CD8-positive, alpha-beta memory T cell (primary cell): ENCODE measurements at regions of chr16 and their contacts with region 1.

Region 1: GRCh38 chr16:87778830-87779579 is 13.2 kb upstream of the KLHDC4 start:
- DNase-seq: peak; percentile 84 to 92 (median 87)
- H3K4me3 ChIP-seq: no peak overlapping the region
- H3K4me3 Mint-ChIP-seq: peak overlapping the region; percentile 37 to 77 (median 68)
- H3K27ac ChIP-seq: peak overlapping the region; percentile 69
- H3K27ac Mint-ChIP-seq: peak overlapping the region; percentile 34 to 99 (median 96)
- H3K4me1 ChIP-seq: peaks cover 42% of the 10 kb centered on the region
- H3K4me1 Mint-ChIP-seq: peaks cover 30 to 39% (median 36%) of the 10 kb centered on the region in 3 donors
- H3K27me3 ChIP-seq: no peaks in the 10 kb centered on the region
- H3K27me3 Mint-ChIP-seq: peaks cover 0 to 3% of the 10 kb centered on the region in 2 donors

Region 2: DNA sequence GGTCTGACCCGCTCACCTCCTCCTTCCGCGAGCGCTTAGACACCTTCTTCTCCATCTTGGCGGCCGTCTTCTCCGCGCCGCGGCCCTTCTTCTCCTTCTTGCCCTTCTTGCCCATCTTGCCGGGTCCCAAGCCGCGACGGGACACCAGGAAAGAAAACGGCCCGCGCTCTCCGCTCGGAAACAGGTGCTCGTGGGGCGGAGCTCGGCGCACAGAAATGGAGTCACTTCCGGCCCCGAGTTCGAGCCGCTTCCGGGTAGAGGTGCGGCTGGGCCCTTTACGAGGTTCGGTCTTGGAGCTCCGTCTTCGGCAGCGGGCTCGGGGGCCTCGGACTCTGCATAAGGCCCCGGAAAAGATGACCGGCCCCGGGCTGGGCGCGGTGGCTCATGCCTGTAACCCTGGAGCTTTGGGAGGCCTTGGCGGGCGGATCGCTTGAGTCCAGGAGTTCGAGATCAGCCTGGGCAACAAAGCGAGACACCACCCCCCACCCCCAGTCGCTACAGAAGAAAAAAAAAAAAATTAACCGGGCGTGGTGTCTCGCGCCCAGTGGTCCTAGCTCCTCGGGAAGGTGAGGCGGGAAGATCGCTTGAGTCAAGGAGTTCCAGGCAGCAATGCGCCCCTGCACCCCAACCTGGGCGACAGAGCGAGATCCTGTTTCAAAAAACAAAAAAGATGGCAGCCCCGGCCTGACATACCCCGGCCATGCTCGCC is 13.1 kb before region 1 on chr16 and contains the start of gene KLHDC4:
- CTCF ChIA-PET with region 1: interaction called, 77 read pairs
- POLR2A ChIA-PET with region 1: interaction called, 15 read pairs
- DNase-seq: peak; percentile 84 to 92 (median 86)
- H3K4me3 ChIP-seq: peak within 1 kb of the TSS; percentile 89
- H3K4me3 Mint-ChIP-seq: peak within 1 kb of the TSS; percentile 95 to 100 (median 96)
- H3K27ac ChIP-seq: peak within 1 kb of the TSS; percentile 93
- H3K27ac Mint-ChIP-seq: peak within 1 kb of the TSS; percentile 95 to 100 (median 99)
- H3K4me1 ChIP-seq: peaks cover 43% of the 10 kb centered on the region
- H3K4me1 Mint-ChIP-seq: peaks cover 46 to 51% (median 51%) of the 10 kb centered on the region in 3 donors
- H3K27me3 ChIP-seq: no peaks in the 10 kb centered on the region
- H3K27me3 Mint-ChIP-seq: peaks cover 0 to 2% of the 10 kb centered on the region in 2 donors
- total RNA-seq, gene KLHDC4: 71.5 to 77.3 TPM

Region 3: DNA sequence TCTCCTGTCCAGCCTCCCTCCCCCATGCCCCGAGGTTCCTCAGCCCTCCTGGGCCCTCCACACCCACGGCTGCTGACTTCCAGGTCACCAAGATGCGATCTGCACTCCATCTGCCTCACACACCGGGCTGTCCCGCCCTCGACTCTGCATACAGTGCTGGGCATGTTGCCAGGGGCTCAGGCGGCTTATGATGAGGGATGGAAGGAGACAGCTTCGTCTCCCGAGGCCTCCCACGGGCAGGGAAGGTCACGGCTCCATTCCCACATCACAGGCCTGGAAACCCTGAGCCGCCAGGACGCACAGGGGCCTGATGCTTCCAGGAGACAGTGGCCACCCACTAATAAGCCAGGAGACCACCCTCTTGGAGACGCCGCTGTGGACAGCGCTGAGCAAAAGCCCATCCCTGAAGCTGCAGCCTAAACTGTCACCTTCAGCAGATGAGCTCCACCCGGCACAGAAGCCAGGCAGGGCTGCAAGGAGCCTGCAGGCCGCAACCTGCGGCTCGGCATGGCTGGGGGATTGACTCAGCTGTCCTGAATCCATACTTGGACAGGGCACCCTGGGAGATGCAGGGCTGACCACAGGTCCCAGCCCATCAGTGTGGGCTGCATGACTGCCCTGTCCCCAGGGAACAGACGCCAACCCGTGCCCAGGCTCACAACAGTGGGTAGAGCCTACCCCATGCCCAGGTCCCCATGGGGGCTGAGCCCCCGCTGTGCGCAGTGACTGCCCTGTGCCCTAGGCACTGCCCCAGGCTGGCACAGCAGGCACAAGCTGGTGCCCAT is 55.8 kb after region 1 on chr16:
- CTCF ChIA-PET with region 1: interaction called, 10 read pairs
- POLR2A ChIA-PET with region 1: no interaction called
- DNase-seq: no peak
- H3K4me3 ChIP-seq: no peak overlapping the region
- H3K4me3 Mint-ChIP-seq: peak overlapping the region in 1 of 7 donors; percentile 23
- H3K27ac ChIP-seq: no peak overlapping the region
- H3K27ac Mint-ChIP-seq: peak overlapping the region in 1 of 8 donors; percentile 66
- H3K4me1 ChIP-seq: no peaks in the 10 kb centered on the region
- H3K4me1 Mint-ChIP-seq: no peaks in the 10 kb centered on the region
- H3K27me3 ChIP-seq: no peaks in the 10 kb centered on the region
- H3K27me3 Mint-ChIP-seq: peaks cover 0 to 2% of the 10 kb centered on the region in 2 donors

Region 4: GRCh38 chr16:87853411-87854052 is 74.5 kb after region 1 on chr16:
- CTCF ChIA-PET with region 1: interaction called, 86 read pairs
- POLR2A ChIA-PET with region 1: interaction called, 4 read pairs
- DNase-seq: peak; percentile 66 to 91 (median 86)
- H3K4me3 ChIP-seq: peak overlapping the region; percentile 46
- H3K4me3 Mint-ChIP-seq: peak overlapping the region; percentile 57 to 87 (median 68)
- H3K27ac ChIP-seq: peak overlapping the region; percentile 82
- H3K27ac Mint-ChIP-seq: peak overlapping the region; percentile 70 to 99 (median 90)
- H3K4me1 ChIP-seq: peaks cover 53% of the 10 kb centered on the region
- H3K4me1 Mint-ChIP-seq: peaks cover 41 to 64% (median 46%) of the 10 kb centered on the region in 3 donors
- H3K27me3 ChIP-seq: no peaks in the 10 kb centered on the region
- H3K27me3 Mint-ChIP-seq: peaks cover 0 to 1% of the 10 kb centered on the region in 2 donors

Region 5: DNA sequence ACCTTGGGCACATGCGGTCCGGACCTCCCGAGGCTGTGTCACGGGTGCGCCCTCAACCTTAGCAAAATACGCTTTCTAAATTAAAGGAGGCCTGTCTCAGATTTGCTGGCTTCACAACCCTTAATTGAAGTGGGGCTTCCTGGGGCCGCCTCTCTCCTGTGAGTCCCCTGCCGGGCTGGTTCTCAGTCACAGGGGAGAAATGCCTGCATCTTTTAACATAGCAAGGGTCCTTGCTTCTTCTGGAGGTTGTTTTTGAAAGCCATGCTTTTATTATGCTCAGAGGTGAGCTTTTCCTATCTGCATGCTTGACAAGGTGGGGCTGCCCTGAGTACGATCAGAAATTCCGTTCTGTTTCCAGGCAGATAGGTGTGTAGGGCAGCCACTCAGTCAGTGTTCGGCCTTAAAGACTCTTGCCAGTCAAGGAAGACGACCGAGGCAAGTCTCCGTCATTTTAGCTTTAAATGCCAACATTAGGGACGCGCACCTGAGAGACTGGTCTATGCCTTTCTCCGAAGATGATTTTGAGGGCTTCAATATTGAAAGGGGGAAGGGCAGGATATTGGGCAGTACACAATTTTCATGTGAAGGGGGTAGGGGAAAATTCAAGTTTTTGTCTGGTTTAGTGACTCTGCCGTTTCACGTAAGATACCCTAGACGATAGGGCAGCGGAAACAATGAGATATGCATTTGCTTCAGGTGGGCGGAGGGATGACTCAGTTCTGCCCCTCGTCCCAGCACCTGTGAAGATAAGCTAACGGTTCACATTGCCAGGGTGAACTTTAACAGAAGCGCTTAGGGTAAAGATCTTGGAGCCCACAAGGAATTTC is 95.8 kb after region 1 on chr16:
- CTCF ChIA-PET with region 1: interaction called, 227 read pairs
- POLR2A ChIA-PET with region 1: interaction called, 17 read pairs
- DNase-seq: peak in 1 of 5 donors; percentile 68
- H3K4me3 ChIP-seq: no peak overlapping the region
- H3K4me3 Mint-ChIP-seq: peak overlapping the region in 6 of 7 donors; percentile 28 to 81 (median 38)
- H3K27ac ChIP-seq: no peak overlapping the region
- H3K27ac Mint-ChIP-seq: peak overlapping the region in 6 of 8 donors; percentile 5 to 84 (median 50)
- H3K4me1 ChIP-seq: peaks cover 12% of the 10 kb centered on the region
- H3K4me1 Mint-ChIP-seq: peaks cover 15 to 21% (median 19%) of the 10 kb centered on the region in 3 donors
- H3K27me3 ChIP-seq: no peaks in the 10 kb centered on the region
- H3K27me3 Mint-ChIP-seq: peaks cover 2 to 7% of the 10 kb centered on the region in 2 donors

Region 6: GRCh38 chr16:87918866-87919680 is 140.1 kb after region 1 on chr16:
- CTCF ChIA-PET with region 1: interaction called, 10 read pairs
- POLR2A ChIA-PET with region 1: no interaction called
- DNase-seq: no peak
- H3K4me3 ChIP-seq: no peak overlapping the region
- H3K4me3 Mint-ChIP-seq: no peak overlapping the region
- H3K27ac ChIP-seq: no peak overlapping the region
- H3K27ac Mint-ChIP-seq: peak overlapping the region in 1 of 8 donors; percentile 90
- H3K4me1 ChIP-seq: no peaks in the 10 kb centered on the region
- H3K4me1 Mint-ChIP-seq: no peaks in the 10 kb centered on the region
- H3K27me3 ChIP-seq: no peaks in the 10 kb centered on the region
- H3K27me3 Mint-ChIP-seq: peaks cover 5 to 12% of the 10 kb centered on the region in 2 donors

Region 7: GRCh38 chr16:88550246-88550661 is 771.2 kb after region 1 on chr16:
- CTCF ChIA-PET with region 1: no interaction called
- POLR2A ChIA-PET with region 1: no interaction called
- DNase-seq: no peak
- H3K4me3 ChIP-seq: peak overlapping the region; percentile 12
- H3K4me3 Mint-ChIP-seq: peak overlapping the region in 1 of 7 donors; percentile 57
- H3K27ac ChIP-seq: no peak overlapping the region
- H3K27ac Mint-ChIP-seq: peak overlapping the region in 3 of 8 donors; percentile 12 to 64 (median 26)
- H3K4me1 ChIP-seq: peaks cover 11% of the 10 kb centered on the region
- H3K4me1 Mint-ChIP-seq: peaks cover 6 to 24% (median 7%) of the 10 kb centered on the region in 3 donors
- H3K27me3 ChIP-seq: no peaks in the 10 kb centered on the region
- H3K27me3 Mint-ChIP-seq: peaks cover 12 to 16% of the 10 kb centered on the region in 2 donors